Right ventricle myocardium inferior (tissue), 1 donor: ENCODE measurements at regions of chr1 and their contacts with region 1.

Region 1: GRCh38 chr1:28736450-28737306 is at the start of gene YTHDF2:
- DNase-seq: peak; percentile 100
- ATAC-seq: peak; percentile 99
- total RNA-seq, gene YTHDF2: 37.9 TPM

Region 2: DNA sequence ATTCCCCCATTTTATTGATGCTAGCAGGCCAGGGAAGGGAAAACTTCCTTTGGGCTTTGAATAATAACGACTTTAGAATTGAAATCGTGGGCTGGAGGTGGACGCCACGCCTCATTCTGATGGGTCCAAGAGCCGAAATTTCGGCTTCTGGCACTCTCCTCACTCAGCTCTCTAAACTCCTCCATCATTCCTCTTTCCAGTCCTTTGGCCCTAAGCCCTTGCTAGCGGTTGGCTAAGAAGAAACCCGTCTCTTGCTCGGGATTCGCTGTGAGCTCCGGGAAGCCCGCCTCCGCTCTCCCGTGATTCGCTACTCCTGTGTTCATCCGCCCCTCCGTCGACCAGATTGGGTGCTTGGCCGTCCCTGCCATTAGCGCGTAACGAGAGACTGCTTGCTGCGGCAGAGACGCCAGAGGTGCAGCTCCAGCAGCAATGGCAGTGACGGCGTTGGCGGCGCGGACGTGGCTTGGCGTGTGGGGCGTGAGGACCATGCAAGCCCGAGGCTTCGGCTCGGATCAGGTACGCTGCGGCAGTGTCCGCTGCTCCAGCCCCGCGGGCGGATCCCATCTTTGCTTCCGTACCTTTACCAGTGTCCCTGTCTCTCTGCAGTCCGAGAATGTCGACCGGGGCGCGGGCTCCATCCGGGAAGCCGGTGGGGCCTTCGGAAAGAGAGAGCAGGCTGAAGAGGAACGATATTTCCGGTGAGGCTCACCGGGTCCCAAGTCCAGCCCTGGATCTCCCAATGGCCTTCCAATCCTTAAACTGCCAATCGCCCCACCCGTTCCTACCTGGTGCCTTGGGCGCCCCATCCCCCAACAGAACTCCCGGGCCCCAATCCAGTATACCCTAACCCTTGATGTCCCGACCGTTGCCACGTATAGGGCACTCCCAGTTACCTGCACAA is 500.7 kb before region 1 on chr1 and contains the start of gene ATP5IF1:
- intact Hi-C with region 1: loop called (anchors 10 kb)
- DNase-seq: peak; percentile 99
- ATAC-seq: peak; percentile 96
- total RNA-seq, gene ATP5IF1: 355 TPM

Region 3: DNA sequence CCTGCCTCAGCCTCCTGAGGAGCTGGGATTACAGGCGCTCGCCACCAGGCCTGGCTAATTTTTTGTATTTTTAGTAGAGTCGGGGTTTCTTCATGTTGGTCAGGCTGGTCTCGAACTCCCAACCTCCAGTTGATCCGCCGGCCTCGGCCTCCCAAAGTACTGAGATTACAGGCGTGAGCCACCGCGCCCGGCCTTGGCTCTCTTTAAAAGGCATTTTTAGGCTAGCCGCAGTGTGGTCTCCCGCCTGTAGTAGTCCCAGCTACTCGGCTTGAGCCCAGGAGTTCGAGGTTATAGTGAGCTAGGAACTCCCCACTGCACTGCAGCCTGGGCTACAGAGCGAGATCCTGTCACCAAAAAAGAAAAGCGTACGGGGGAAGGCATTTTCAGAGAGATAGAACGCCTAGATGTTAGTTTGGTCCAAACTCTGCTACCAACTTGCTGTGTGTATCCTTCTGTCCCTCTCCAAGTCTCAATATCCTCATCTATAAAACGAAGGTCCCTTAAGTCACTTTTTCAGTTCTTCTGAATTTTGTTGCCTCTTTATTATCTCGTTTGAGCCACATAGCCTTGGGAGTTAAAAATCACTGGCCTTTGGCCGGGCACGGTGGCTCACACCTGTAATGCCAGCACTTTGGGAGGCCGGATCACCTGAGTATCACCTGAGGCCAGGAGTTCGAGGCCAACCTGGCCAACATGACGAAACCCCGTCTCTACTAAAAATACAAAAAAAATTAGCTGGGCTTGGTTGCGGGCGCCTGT is 407.1 kb before region 1 on chr1:
- intact Hi-C with region 1: loop called (anchors 5 kb)
- DNase-seq: no peak
- ATAC-seq: no peak

Region 4: GRCh38 chr1:28449904-28450303 is 286.8 kb before region 1 on chr1:
- intact Hi-C with region 1: no loop called
- DNase-seq: no peak
- ATAC-seq: no peak

Region 5: DNA sequence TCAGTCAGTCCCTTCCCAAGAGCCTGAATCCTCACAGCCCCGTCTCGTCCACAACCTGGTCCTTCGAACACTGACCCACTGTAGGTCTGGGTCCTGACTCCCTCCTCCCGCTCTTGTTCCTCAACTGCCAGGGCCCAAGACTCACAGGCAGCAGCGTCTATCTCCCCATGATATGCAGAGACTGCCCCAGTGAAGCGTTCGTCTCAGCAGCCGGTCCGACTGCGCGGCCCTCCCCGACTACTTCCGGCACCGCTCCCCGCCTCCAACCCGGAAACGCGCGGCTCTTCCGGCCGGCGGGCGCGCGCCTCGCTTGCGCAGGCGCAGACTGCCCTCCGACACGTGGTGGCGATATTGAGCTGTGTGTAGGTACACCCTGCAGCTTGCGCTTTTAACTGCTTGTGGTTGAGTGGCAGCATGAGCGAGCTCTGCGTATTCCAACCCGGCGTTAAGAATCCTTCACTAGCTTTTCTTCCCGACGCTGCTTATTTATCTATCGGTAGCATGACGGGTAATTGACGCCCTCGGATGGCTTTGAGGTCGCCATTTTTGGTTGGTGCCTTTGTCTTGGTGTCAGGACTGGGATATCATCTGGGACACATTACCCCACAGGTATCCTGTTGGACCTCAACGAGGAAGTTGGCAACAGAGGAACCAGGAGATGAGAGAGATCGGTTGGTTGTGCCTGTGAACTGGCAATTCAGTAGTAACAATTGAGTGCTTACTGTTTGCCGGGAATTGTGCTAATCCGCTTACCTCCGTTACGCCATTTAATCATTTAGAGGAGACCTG is 93.6 kb before region 1 on chr1 and contains the start of gene TAF12:
- intact Hi-C with region 1: loop called (anchors 1 kb)
- DNase-seq: peak; percentile 96
- ATAC-seq: peak; percentile 97
- total RNA-seq, gene TAF12: 27.7 TPM

Region 6: DNA sequence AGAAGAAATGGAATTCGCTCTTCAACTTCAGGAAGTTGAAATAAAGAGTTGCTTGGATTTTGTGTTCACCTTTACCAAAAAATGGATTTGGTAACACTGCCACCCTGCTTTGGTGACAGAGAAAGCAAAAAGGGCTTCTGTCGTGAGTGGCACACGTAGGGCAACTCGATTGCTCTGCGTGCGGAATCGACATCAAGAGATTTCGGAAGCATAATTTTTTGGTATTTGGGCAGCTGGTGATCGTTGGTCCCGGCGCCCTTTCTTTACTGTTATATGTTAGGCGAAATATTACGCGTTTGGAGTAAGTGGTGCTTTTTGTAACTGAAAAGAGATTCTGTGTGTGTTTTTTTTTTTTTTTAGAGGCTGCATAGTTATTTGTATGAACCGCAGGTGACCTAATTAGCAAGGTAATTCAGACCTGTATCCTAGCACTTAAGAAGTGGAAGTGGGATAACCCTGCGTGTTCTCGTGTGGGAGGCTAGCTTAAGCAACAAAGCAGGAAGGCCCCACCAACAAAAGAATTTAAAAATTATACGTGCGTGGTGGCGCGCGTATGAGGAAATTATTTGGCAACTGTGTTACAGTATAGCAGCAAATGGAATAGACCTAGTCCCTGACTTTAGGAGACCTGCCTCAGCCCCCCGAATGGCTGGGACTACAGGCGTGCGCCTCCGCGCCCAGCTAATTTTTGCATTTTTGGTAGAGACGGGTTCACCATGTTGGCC is 88.0 kb before region 1 on chr1 and contains the start of gene RNU11:
- intact Hi-C with region 1: loop called (anchors 1 kb)
- DNase-seq: peak; percentile 86
- ATAC-seq: peak; percentile 87
- total RNA-seq, gene RNU11: not detected

Region 7: GRCh38 chr1:28668191-28668955 is 68.3 kb before region 1 on chr1 and contains the start of gene GMEB1:
- intact Hi-C with region 1: loop called (anchors 5 kb)
- DNase-seq: peak; percentile 95
- ATAC-seq: peak; percentile 89
- total RNA-seq, gene GMEB1: 6.5 TPM